ENCODE measurements at regions of chr7 and their contacts with region 1.

Region 1: DNA sequence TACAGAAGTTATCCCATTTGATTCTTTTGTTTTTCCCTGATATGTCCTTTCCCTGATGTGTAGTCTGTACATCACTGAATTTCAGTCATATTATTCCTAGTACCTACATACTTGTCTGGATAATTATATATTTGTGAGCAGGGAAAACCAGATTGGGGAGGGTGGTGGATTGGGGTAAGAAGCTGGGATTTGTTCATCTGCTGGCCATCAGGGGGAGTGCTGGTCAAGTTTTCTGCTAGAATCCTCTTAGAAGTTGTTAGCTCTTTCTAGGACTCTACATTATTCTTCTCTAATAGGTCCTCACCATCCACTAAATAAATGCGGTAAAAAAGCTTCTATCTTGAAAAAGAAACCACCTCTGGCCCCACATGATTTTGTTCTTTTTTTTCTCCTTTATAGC is 232.7 kb upstream of the TAC1 start:
- DNase-seq: peak; percentile 10
- H3K4me3 ChIP-seq: no peak overlapping the region
- H3K27ac ChIP-seq: no peak overlapping the region
- H3K4me1 ChIP-seq: no peaks in the 10 kb centered on the region
- H3K27me3 ChIP-seq: no peaks in the 10 kb centered on the region
- CTCF ChIP-seq: peak; percentile 44 to 71

Region 2: DNA sequence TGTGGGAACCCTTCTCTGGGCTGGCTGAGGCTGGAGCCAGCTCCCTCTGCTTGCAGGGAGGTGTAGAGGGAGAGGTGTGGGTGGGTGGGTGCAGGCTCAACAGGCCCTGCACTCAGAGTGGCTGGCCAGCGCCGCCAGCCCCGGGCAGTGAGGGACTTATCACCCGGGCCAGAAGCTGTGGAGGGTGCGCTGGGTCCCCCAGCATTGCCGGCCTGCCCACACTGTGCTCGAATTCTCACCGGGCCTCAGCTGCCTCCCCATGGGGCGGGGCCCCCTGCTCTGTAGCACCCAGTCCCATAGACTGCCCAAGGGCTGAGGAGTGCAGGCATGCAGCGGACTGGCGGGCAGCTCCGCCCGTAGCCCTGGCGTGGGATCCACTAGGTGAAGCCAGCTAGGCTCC is 42.0 kb after region 1 on chr7:
- CTCF ChIA-PET with region 1: no interaction called
- dilution Hi-C with region 1: no loop called
- in situ Hi-C with region 1: no loop called
- intact Hi-C with region 1: no loop called
- DNase-seq: no peak
- H3K4me3 ChIP-seq: no peak overlapping the region
- H3K27ac ChIP-seq: no peak overlapping the region
- H3K4me1 ChIP-seq: no peaks in the 10 kb centered on the region
- H3K27me3 ChIP-seq: no peaks in the 10 kb centered on the region
- CTCF ChIP-seq: no peak

Region 3: DNA sequence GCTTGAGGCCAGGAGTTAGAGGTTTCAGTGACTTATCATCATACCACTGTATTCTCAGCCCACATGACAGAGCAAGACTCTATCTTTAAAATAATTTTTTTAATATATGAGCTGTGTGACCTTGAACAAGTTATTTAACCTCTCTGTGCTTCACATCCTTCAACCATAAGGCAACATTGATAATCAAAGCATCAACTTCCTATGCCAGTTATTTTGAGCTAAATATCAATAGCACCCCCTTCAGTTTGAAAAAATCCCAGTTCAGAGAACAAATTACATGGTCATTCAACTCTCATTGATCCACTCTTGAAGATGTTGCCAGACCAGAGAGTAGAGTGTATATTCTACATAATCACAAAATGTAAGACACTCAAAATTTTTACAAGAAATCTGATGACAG is 320.0 kb after region 1 on chr7:
- CTCF ChIA-PET with region 1: no interaction called
- dilution Hi-C with region 1: no loop called
- in situ Hi-C with region 1: no loop called
- intact Hi-C with region 1: loop called (anchors 1 kb)
- DNase-seq: no peak
- H3K4me3 ChIP-seq: no peak overlapping the region
- H3K27ac ChIP-seq: no peak overlapping the region
- H3K4me1 ChIP-seq: no peaks in the 10 kb centered on the region
- H3K27me3 ChIP-seq: no peaks in the 10 kb centered on the region
- CTCF ChIP-seq: peak in 1 of 2 donors; percentile 35